Naive thymus-derived CD4-positive, alpha-beta T cell (primary cell): ENCODE measurements at regions of chr13 and their contacts with region 1.

Region 1: GRCh38 chr13:98570929-98571372 is 6.0 kb downstream of the STK24 start:
- DNase-seq: peak in 6 of 9 donors; percentile 51 to 72 (median 60)
- ATAC-seq: peak; percentile 70
- H3K4me3 ChIP-seq: peak overlapping the region; percentile 63
- H3K4me3 Mint-ChIP-seq: peak overlapping the region; percentile 84 to 99 (median 90)
- H3K27ac ChIP-seq: peak overlapping the region; percentile 85
- H3K27ac Mint-ChIP-seq: peak overlapping the region; percentile 84 to 98 (median 96)
- H3K4me1 ChIP-seq: peaks cover 76 to 83% of the 10 kb centered on the region in 2 donors
- H3K4me1 Mint-ChIP-seq: peaks cover 82 to 97% (median 96%) of the 10 kb centered on the region in 7 donors
- H3K27me3 ChIP-seq: no peaks in the 10 kb centered on the region
- H3K27me3 Mint-ChIP-seq: no peaks in the 10 kb centered on the region

Region 2: GRCh38 chr13:98384739-98385138 is 186.2 kb before region 1 on chr13:
- CTCF ChIA-PET with region 1: no interaction called
- POLR2A ChIA-PET with region 1: no interaction called
- intact Hi-C with region 1: no loop called
- DNase-seq: no peak
- ATAC-seq: no peak
- H3K4me3 ChIP-seq: no peak overlapping the region
- H3K4me3 Mint-ChIP-seq: no peak overlapping the region
- H3K27ac ChIP-seq: no peak overlapping the region
- H3K27ac Mint-ChIP-seq: no peak overlapping the region
- H3K4me1 ChIP-seq: no peaks in the 10 kb centered on the region
- H3K4me1 Mint-ChIP-seq: no peaks in the 10 kb centered on the region
- H3K27me3 ChIP-seq: peaks cover 0 to 2% of the 10 kb centered on the region in 2 donors
- H3K27me3 Mint-ChIP-seq: peaks cover 7 to 15% (median 12%) of the 10 kb centered on the region in 5 donors

Region 3: GRCh38 chr13:98556968-98557631 is 13.9 kb before region 1 on chr13:
- CTCF ChIA-PET with region 1: no interaction called
- POLR2A ChIA-PET with region 1: interaction called, 13 read pairs
- intact Hi-C with region 1: no loop called
- DNase-seq: no peak
- ATAC-seq: peak; percentile 62
- H3K4me3 ChIP-seq: no peak overlapping the region
- H3K4me3 Mint-ChIP-seq: peak overlapping the region; percentile 54 to 77 (median 68)
- H3K27ac ChIP-seq: peak overlapping the region; percentile 3
- H3K27ac Mint-ChIP-seq: peak overlapping the region; percentile 16 to 92 (median 84)
- H3K4me1 ChIP-seq: peaks cover 29 to 67% of the 10 kb centered on the region in 2 donors
- H3K4me1 Mint-ChIP-seq: peaks cover 66 to 94% (median 84%) of the 10 kb centered on the region in 7 donors
- H3K27me3 ChIP-seq: no peaks in the 10 kb centered on the region
- H3K27me3 Mint-ChIP-seq: no peaks in the 10 kb centered on the region

Region 4: GRCh38 chr13:99261059-99261458 is 690.1 kb after region 1 on chr13:
- CTCF ChIA-PET with region 1: no interaction called
- POLR2A ChIA-PET with region 1: no interaction called
- intact Hi-C with region 1: no loop called
- DNase-seq: no peak
- ATAC-seq: no peak
- H3K4me3 ChIP-seq: no peak overlapping the region
- H3K4me3 Mint-ChIP-seq: peak overlapping the region in 4 of 10 donors; percentile 7 to 93 (median 25)
- H3K27ac ChIP-seq: peak overlapping the region; percentile 24
- H3K27ac Mint-ChIP-seq: peak overlapping the region; percentile 4 to 95 (median 90)
- H3K4me1 ChIP-seq: peaks cover 37 to 50% of the 10 kb centered on the region in 2 donors
- H3K4me1 Mint-ChIP-seq: peaks cover 35 to 83% (median 70%) of the 10 kb centered on the region in 7 donors
- H3K27me3 ChIP-seq: no peaks in the 10 kb centered on the region
- H3K27me3 Mint-ChIP-seq: no peaks in the 10 kb centered on the region